Activated CD4-positive, alpha-beta T cell treated with anti-CD3 and anti-CD28 coated beads, Interleukin-2, amount 10 ng/mL, durations not matched to agents 24 days and 14 days (primary cell): ENCODE measurements at regions of chr11 and their contacts with region 1.

Region 1: DNA sequence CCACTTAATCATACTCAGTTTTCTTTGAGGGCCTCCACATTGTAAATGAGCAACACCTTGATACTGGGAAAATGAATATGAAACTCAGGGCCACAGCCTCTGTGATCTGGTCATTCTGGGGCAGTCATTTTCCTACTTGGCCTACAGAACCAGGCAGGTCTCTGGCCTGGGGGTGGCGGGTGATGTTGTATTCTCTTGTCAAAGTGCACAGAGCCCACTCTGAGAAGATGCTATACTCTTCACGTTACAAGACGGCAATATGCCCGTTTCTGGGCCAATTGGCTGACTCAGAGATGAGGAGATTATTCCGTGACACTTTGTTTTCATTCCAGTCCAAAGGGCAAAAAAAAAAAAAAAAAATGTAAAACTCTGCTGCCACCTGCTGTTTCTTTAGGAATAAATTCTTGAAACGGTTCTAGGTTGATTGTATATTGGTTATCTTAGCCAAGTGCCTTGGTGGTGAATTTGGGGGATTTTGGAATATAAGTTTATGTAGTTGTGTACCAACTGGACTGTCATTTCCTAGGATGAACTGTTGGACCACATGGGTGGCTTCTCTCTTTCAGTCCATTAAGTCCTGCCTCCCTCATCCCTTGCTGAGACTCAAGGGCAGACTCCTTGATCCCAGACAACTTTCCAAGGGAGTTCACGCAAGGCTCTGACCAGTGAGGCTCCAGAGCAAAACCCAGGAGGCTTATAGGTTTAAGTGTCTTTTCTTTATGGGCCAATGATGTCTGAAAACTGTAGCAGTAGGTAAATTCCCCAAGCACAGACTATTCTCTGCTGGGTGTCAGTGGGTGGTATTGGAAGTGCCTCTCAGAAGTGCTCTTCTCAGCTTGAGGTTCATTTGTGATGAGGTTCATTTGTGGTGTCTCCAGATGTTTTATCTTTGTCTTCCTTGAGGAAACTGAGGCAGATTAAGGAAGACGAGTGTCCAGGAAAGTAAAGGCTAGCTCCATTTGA is 18.2 kb downstream of the ADM start:
- DNase-seq: peak; percentile 85
- H3K4me3 Mint-ChIP-seq: peak overlapping the region; percentile 62
- H3K27ac Mint-ChIP-seq: peak overlapping the region; percentile 94
- H3K4me1 Mint-ChIP-seq: peaks cover 21% of the 10 kb centered on the region
- H3K27me3 Mint-ChIP-seq: peaks cover 13% of the 10 kb centered on the region

Region 2: DNA sequence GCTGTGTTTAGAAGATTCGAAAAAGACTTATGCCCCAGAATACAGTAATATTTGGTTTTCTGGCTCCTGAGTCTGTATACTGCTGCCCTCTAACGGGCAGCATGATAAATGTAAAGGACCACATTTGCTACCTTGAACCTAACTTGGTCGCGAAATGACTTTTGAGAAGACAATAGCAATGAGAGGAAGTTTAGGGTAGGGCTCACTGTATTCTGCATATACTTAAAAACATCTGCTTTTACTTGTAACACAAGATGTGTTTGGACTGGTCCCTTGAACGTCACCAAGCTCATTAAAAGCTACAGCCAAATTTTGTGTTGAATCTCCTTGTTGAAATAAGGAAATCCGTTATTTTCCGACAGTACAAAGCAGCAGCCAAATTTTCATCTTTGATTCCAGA is 350.1 kb before region 1 on chr11:
- intact Hi-C with region 1: loop called (anchors 5 kb)
- DNase-seq: peak; percentile 80
- H3K4me3 Mint-ChIP-seq: no peak overlapping the region
- H3K27ac Mint-ChIP-seq: no peak overlapping the region
- H3K4me1 Mint-ChIP-seq: peaks cover 4% of the 10 kb centered on the region
- H3K27me3 Mint-ChIP-seq: no peaks in the 10 kb centered on the region

Region 3: GRCh38 chr11:10076458-10077141 is 246.5 kb before region 1 on chr11:
- intact Hi-C with region 1: loop called (anchors 10 kb)
- DNase-seq: peak; percentile 79
- H3K4me3 Mint-ChIP-seq: no peak overlapping the region
- H3K27ac Mint-ChIP-seq: no peak overlapping the region
- H3K4me1 Mint-ChIP-seq: no peaks in the 10 kb centered on the region
- H3K27me3 Mint-ChIP-seq: no peaks in the 10 kb centered on the region

Region 4: DNA sequence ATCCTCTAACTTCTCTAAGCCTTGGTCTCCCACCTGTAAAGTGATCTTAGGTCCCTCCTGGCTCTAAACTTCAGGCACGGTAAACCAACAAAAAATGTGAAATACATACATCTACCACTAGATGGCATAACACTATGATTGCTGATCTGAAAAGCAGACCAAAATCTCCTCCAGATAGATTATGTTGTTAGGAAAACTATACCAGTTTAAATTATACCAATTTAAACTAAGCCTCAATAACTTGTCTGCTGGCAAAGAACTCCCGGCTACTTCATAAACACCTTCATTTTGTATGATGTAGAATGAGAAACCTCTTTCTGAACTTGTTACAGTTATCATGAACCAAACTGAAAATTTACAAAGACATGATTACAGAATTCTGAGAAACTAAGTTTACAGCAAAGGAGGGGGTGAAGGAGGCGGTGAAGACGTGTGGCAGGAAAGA is 115.0 kb before region 1 on chr11:
- intact Hi-C with region 1: loop called (anchors 1 kb)
- DNase-seq: peak; percentile 68
- H3K4me3 Mint-ChIP-seq: no peak overlapping the region
- H3K27ac Mint-ChIP-seq: no peak overlapping the region
- H3K4me1 Mint-ChIP-seq: peaks cover 1% of the 10 kb centered on the region
- H3K27me3 Mint-ChIP-seq: peaks cover 21% of the 10 kb centered on the region